Heart left ventricle (tissue), 16 donors: ENCODE measurements at regions of chr9 and their contacts with region 1.

Region 1: GRCh38 chr9:92634712-92635605 is 35.0 kb downstream of the IPPK start:
- DNase-seq: peak; percentile 77 to 90 (median 80)
- ATAC-seq: peak; percentile 75 to 91 (median 87)
- H3K4me3 ChIP-seq: peak overlapping the region in 1 of 12 donors; percentile 19
- H3K27ac ChIP-seq: peak overlapping the region in 6 of 12 donors; percentile 3 to 62 (median 36)
- H3K4me1 ChIP-seq: peaks cover 0 to 22% (median 4%) of the 10 kb centered on the region in 12 donors
- H3K27me3 ChIP-seq: no peaks in the 10 kb centered on the region
- CTCF ChIP-seq: peak; percentile 85 to 98 (median 90)
- POLR2A ChIP-seq: no peak

Region 2: DNA sequence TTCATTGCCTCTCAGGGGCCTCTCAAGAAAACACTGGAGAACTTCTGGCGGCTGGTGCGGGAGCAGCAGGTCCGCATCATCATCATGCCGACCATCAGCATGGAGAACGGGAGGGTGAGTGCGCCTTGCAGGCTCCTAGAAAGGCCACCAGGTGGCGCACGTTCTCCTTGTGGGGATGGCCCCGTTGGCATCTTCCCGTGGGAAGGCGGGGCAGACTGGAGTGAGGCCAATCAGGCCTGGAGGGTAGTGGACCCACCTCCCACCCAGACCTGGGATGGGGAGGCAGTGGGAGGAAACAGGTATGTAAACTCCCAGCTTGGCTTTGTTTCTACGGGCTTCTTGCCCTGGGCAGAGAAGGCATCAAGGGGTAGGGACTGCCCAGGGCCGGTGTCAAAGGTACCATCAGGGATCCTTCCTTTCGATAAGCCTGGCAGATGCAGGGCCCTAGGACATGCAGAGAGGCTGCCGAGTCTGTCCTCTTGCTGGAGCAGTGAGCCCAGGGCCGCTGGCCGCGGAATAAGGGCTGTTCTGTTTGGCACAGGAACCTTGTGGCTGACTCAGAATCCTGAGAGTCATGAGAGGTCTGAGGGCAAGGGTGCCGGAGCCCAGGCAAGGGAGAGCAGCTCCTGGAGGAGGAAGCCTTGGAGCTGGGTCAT is 500.9 kb before region 1 on chr9:
- intact Hi-C with region 1: loop called in 7 of 10 experiments (anchors 2 to 10 kb)
- DNase-seq: peak; percentile 68 to 87 (median 78)
- ATAC-seq: peak; percentile 41 to 79 (median 74)
- H3K4me3 ChIP-seq: peak overlapping the region in 5 of 12 donors; percentile 4 to 18 (median 13)
- H3K27ac ChIP-seq: no peak overlapping the region
- H3K4me1 ChIP-seq: peaks cover 0 to 11% (median 0%) of the 10 kb centered on the region in 12 donors
- H3K27me3 ChIP-seq: peaks cover 0 to 10% (median 0%) of the 10 kb centered on the region in 9 donors
- CTCF ChIP-seq: peak; percentile 87 to 98 (median 93)
- POLR2A ChIP-seq: no peak

Region 3: GRCh38 chr9:92293452-92294296 is 341.3 kb before region 1 on chr9 and contains the start of gene IARS1:
- intact Hi-C with region 1: loop called in 1 of 10 experiments (anchors 10 kb)
- DNase-seq: peak; percentile 98 to 99 (median 98)
- ATAC-seq: peak; percentile 99 to 100 (median 100)
- H3K4me3 ChIP-seq: peak within 1 kb of the TSS; percentile 41 to 91 (median 72)
- H3K27ac ChIP-seq: peak within 1 kb of the TSS in 11 of 12 donors; percentile 51 to 85 (median 71)
- H3K4me1 ChIP-seq: peaks cover 0 to 34% (median 22%) of the 10 kb centered on the region in 12 donors
- H3K27me3 ChIP-seq: no peaks in the 10 kb centered on the region
- CTCF ChIP-seq: peak in 11 of 12 donors; percentile 6 to 65 (median 36)
- POLR2A ChIP-seq: peak in 1 of 2 donors; percentile 77
- total RNA-seq, gene IARS1: 44.2 to 85.3 (median 68.1) TPM

Region 4: GRCh38 chr9:92342825-92343488 is 292.0 kb before region 1 on chr9:
- intact Hi-C with region 1: loop called in 5 of 10 experiments (anchors 1 to 10 kb)
- DNase-seq: no peak
- ATAC-seq: no peak
- H3K4me3 ChIP-seq: no peak overlapping the region
- H3K27ac ChIP-seq: peak overlapping the region in 2 of 12 donors; percentile 0 to 6
- H3K4me1 ChIP-seq: peaks cover 0 to 8% (median 0%) of the 10 kb centered on the region in 12 donors
- H3K27me3 ChIP-seq: no peaks in the 10 kb centered on the region
- CTCF ChIP-seq: peak in 9 of 12 donors; percentile 20 to 57 (median 37)
- POLR2A ChIP-seq: no peak

Region 5: DNA sequence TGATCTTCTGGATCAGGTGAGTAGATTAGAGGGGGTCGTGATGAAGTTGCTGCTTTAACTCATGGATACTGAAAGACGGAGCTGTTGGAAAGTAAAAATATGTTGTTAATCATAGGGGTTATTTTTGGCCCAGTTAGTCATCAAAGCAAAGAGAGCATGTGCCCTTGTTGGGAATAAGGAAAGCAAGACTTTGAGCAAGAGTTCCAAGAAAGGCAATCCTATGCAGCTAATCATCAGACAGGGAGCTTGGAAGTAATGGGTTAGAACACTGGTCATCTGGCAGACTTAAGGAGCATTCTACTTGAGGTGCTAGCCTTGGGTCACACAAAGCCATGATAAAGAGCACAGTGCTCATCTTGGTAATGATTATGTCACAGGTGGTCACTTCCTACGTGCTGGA is 171.0 kb before region 1 on chr9:
- intact Hi-C with region 1: loop called in 1 of 10 experiments (anchors 10 kb)
- DNase-seq: no peak
- ATAC-seq: peak; percentile 47 to 87 (median 75)
- H3K4me3 ChIP-seq: no peak overlapping the region
- H3K27ac ChIP-seq: peak overlapping the region in 7 of 12 donors; percentile 25 to 71 (median 49)
- H3K4me1 ChIP-seq: peaks cover 0 to 16% (median 8%) of the 10 kb centered on the region in 12 donors
- H3K27me3 ChIP-seq: no peaks in the 10 kb centered on the region
- CTCF ChIP-seq: no peak
- POLR2A ChIP-seq: no peak

Region 6: GRCh38 chr9:92774274-92774673 is 139.3 kb after region 1 on chr9:
- intact Hi-C with region 1: no loop called
- DNase-seq: no peak
- ATAC-seq: no peak
- H3K4me3 ChIP-seq: no peak overlapping the region
- H3K27ac ChIP-seq: no peak overlapping the region
- H3K4me1 ChIP-seq: peaks cover 0 to 27% (median 13%) of the 10 kb centered on the region in 12 donors
- H3K27me3 ChIP-seq: no peaks in the 10 kb centered on the region
- CTCF ChIP-seq: no peak
- POLR2A ChIP-seq: no peak